Head of caudate nucleus (tissue), 42 donors: ENCODE measurements at regions of chr4 and their contacts with region 1.

Region 1: DNA sequence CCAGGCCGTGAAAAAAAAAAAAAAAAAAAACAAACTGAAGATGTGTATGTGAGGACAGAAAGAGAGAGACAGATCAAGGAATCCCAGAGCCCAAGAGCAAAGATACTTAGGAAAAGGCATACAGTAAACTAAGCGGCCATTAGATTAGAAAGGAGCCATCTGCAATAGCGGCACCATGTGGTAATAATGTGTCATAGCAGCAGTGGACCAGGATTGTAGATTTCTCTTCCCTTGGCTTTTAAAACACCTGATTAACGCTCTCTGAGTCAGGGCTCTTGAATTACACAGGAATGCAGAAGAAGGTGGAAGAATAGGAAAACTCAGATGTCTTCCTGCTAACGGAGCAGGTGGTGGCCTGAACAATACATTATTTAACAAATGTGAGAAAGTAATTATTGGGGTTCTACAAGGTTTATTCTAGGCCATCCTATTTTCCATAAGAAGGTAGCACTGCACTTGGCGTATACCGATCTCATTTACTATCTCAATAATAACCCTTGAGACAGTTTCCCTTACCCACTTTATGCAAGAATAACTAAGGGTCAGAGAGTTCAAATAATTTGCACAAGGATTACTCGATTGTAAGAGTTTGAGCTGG is 182.7 kb downstream of the KCNIP4 start:
- DNase-seq: peak in 35 of 42 donors; percentile 13 to 83 (median 54)

Region 2: GRCh38 chr4:20773144-20773997 is 992.5 kb before region 1 on chr4:
- intact Hi-C with region 1: loop called (anchors 10 kb)
- DNase-seq: peak in 39 of 42 donors; percentile 5 to 82 (median 48)

Region 3: GRCh38 chr4:21512353-21512752 is 253.6 kb before region 1 on chr4:
- intact Hi-C with region 1: loop called (anchors 2 kb)
- DNase-seq: peak in 10 of 42 donors; percentile 5 to 66 (median 20)